ENCODE measurements at regions of chr1 and their contacts with region 1.

Region 1: GRCh38 chr1:168234846-168235547 is 9.2 kb downstream of the SFT2D2 start:
- DNase-seq: peak; percentile 85
- H3K4me3 Mint-ChIP-seq: peak overlapping the region; percentile 52
- H3K27ac Mint-ChIP-seq: peak overlapping the region; percentile 92
- H3K4me1 Mint-ChIP-seq: peaks cover 67% of the 10 kb centered on the region
- H3K27me3 Mint-ChIP-seq: no peaks in the 10 kb centered on the region

Region 2: DNA sequence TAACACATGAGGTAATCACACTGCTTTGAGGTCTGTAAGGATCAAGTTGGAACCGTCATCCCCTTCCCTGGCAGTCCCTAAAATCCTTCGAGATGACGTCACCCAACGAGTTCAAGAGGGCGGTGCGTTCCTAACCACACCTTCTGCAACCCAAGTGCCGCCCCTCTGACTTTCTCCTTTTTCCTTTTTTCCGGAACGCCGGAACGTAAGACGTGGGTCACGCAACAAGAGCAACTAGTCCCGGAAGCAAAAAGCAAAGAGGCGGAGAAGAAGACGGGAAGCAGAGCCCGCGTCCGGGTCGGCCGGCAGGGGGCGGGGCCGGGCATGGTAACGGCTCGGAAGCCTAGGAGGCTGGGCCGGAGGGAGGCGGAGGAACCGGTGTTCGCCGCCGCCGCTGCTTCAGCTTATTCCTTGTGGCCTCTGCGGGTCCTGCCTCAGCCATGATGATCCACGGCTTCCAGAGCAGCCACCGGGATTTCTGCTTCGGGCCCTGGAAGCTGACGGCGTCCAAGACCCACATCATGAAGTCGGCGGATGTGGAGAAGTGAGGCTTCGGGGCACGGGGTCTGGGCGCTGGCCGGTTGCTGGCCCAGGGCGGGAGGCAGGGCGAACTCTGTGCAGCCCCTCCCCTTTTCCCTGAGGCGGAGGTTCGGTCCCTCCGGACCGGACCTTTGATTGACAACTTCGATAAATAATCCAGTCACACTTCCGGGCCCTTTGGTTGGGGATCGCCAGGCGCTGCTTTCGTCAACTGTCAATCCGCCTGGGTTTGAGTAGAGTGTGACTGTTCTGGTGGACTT is 56.2 kb before region 1 on chr1 and contains the start of gene TIPRL:
- intact Hi-C with region 1: loop called (anchors 1 kb)
- DNase-seq: peak; percentile 98
- H3K4me3 Mint-ChIP-seq: no peak within 1 kb of the TSS
- H3K27ac Mint-ChIP-seq: no peak within 1 kb of the TSS
- H3K4me1 Mint-ChIP-seq: peaks cover 8% of the 10 kb centered on the region
- H3K27me3 Mint-ChIP-seq: peaks cover 6% of the 10 kb centered on the region
- total RNA-seq, gene TIPRL: 46.8 and 49.2 TPM in 2 replicates

Region 3: GRCh38 chr1:168360151-168361021 is 125.4 kb after region 1 on chr1:
- intact Hi-C with region 1: loop called (anchors 2 kb)
- DNase-seq: peak; percentile 75
- H3K4me3 Mint-ChIP-seq: peak overlapping the region; percentile 3
- H3K27ac Mint-ChIP-seq: peak overlapping the region; percentile 46
- H3K4me1 Mint-ChIP-seq: peaks cover 29% of the 10 kb centered on the region
- H3K27me3 Mint-ChIP-seq: peaks cover 12% of the 10 kb centered on the region

Region 4: GRCh38 chr1:168466092-168466713 is 231.2 kb after region 1 on chr1:
- intact Hi-C with region 1: loop called (anchors 5 kb)
- DNase-seq: peak; percentile 75
- H3K4me3 Mint-ChIP-seq: peak overlapping the region; percentile 32
- H3K27ac Mint-ChIP-seq: peak overlapping the region; percentile 71
- H3K4me1 Mint-ChIP-seq: peaks cover 58% of the 10 kb centered on the region
- H3K27me3 Mint-ChIP-seq: no peaks in the 10 kb centered on the region

Region 5: DNA sequence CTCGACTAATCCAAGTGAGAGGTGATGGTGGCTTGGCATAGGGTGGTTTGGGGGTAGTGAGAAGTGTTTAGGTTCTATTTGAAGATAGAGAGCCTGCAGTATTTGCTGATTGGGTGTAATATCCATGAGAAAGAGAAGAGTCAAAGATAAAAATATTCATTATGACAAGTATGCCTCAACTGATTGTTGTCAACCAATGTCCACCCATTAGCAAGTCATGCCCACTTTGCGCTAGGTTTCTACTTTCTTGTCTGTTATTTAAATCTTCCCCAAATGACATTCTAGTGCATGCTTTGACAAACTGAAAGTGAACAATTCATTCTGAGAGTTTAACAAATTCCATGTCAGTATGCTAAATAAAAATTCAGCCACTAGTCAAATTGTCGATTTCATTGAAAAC is 337.6 kb after region 1 on chr1:
- intact Hi-C with region 1: loop called (anchors 10 kb)
- DNase-seq: no peak
- H3K4me3 Mint-ChIP-seq: no peak overlapping the region
- H3K27ac Mint-ChIP-seq: no peak overlapping the region
- H3K4me1 Mint-ChIP-seq: peaks cover 21% of the 10 kb centered on the region
- H3K27me3 Mint-ChIP-seq: peaks cover 21% of the 10 kb centered on the region

Measured in activated CD4-positive, alpha-beta T cell treated with anti-CD3 and anti-CD28 coated beads, Interleukin-2, amount 10 ng/mL, durations not matched to agents 24 days and 14 days (primary cell).